Posterior vena cava (tissue), 2 donors: ENCODE measurements at regions of chr9 and their contacts with region 1.

Region 1: DNA sequence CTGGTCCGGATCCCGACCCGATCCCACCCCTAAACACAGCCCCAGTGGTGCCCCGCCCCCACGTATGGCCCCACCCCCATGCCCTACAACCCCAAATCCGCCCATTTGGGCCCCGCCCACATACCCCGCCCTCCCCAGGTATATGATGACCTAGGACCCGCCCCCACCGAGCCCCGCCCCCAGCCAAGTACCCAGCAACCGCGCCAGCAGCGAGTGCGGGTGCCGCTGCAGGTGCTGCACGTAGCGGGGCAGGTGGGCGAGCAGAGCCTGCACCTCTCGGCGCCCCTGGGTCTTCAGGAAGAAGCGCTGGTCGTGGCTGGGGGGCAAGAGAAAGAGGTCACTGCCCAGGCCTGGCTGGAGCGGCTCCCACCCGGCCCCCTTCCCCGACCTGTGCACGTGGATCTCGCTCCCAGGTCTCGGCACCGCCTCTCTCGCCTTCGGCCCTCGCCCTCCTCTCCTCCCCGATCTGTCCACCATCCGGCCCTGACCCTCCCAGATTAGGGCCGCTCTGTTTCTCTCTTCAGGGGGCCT is 3.1 kb downstream of the PIP5KL1 start:
- DNase-seq: no peak

Region 2: GRCh38 chr9:127970401-127971313 is 43.1 kb after region 1 on chr9:
- intact Hi-C with region 1: no loop called
- DNase-seq: no peak

Region 3: DNA sequence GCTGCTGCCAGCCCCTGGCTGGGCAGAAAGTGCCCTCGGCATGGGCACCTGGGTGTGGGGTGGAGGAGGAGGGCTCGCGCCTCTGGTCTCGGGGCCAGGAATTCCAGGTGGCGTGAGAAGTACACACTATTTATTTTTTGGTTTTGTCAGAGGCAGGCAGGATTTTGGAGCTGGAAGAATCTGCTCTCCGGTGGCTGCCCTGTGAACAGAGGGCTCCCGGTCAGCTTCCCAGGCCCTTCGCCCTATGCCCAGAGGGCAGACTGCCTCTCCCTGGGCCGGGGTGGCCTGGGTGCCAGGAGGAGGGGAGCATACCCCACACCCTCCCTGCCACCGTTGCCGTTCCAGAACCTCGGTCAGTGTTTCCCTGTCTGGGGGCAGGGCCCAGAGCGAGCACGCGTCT is 1161.7 kb after region 1 on chr9:
- intact Hi-C with region 1: loop called in 1 of 2 experiments (anchors 5 kb)
- DNase-seq: no peak

Region 4: DNA sequence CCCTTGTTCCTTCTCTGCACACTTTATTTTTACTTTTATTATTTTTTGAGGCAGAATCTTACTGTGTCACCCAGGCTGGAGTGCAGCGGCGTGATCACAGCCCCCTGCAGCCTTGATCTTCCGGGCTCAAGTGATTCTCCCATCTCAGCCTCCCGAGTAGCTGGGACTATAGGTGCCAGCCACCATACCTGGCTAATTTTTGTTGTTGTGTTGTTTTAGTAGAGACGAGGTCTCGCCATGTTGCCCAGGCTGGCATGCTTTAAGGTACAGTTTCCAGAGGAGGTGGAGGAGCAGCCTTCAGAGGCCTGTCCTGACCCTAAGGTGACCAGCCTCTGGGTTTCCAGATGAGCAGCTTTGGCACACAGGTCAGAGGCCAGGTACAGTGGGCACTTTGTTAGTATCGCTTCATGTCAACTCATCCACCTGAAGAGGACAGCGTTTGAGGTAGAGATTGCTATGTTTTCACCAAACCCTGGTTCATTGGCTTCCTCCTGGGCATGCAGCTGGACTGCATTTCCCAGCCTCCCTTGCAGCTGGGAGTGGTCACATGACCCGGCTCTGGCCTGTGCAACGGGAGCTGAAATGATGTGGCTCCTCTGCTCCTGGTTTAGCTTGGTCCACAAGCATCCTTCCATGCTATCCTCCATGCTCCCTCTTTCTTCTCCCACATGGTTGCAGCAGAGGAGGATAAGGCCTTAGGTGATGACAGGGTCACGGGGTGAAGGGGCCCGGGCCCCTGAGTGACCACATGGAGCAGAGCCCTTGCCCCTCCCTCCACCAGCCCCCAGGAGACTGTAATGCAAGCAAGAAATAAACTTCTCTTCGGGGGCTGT is 1389.9 kb after region 1 on chr9:
- intact Hi-C with region 1: no loop called
- DNase-seq: peak; percentile 80